BJ (cell line): ENCODE measurements at regions of chr6 and their contacts with region 1.

Region 1: DNA sequence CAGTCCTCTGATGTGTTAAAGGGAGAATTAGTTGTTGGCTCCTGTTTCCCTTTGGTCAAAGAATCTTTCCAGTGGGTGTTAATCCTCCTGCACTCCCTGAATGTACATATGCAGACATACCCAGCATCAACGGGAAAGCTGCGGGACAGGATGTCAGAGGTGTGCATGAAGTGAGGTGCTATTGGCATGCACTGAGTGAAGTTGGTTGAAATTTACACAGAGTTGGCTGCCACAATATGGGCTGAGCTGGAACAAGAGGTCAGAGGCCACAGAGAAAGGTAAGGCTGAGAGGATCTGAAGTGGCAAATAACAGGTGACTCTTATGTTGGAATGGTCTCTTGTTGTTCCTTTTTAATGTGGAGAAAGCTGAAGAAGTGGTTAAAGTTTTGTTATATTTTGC is 82.7 kb upstream of the AKIRIN2 start:
- DNase-seq: no peak
- H3K4me3 ChIP-seq: no peak overlapping the region
- H3K27me3 ChIP-seq: peaks cover 5% of the 10 kb centered on the region; the same call in 1 of the 2 replicates
- CTCF ChIP-seq: no peak

Region 2: DNA sequence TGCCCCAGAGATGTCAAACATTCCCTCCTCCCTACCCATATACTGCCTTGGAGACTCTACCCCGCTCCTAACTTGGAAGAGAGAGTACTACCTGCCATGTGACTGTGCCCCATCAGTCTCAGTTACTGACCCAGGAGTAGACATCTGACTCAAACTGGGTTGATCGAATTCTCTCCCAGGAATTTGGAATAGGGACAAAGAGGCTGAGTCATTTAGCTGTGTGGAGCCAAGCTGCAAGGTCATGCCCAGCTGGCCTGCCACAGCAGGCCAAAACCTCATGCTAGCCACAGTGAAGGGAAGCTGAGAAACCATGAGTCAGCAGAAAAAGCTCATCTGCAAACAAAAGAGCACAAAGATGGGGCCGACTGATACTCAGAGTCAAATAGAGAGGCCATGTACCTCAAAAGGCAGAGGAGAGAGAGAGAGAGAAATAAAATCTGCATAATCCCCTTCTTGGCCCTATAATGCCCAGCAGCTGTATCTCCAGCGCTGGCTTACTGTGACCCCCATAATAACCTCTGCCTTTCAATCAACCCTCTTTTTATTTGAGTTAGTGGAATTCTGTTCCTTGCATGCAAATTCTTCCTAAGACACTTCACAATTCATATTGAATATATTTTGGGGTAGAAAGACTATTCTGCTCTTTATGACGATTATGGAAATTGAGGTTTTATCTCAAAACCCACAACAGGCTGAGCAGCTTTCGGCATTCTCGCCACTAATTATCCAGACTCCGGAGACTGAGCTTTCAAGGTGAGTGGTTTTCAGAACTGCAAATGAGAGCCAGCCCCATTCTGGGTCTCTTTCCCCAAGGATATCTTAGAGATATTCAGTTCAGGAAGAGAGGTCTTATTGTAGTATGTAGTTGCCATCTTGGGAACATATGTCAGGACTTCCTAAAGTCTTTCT is 61.3 kb before region 1 on chr6:
- CTCF ChIA-PET with region 1: no interaction called
- POLR2A ChIA-PET with region 1: interaction called, 10 read pairs
- DNase-seq: peak; percentile 79
- H3K4me3 ChIP-seq: no peak overlapping the region
- H3K27me3 ChIP-seq: no peaks in the 10 kb centered on the region
- CTCF ChIP-seq: no peak

Region 3: GRCh38 chr6:87817183-87817582 is 32.5 kb after region 1 on chr6:
- CTCF ChIA-PET with region 1: no interaction called
- POLR2A ChIA-PET with region 1: no interaction called
- DNase-seq: no peak
- H3K4me3 ChIP-seq: no peak overlapping the region
- H3K27me3 ChIP-seq: peaks cover under 1% of the 10 kb centered on the region; the same call in 1 of the 2 replicates
- CTCF ChIP-seq: no peak